CD4-positive, alpha-beta T cell (primary cell): ENCODE measurements at regions of chr1 and their contacts with region 1.

Region 1: DNA sequence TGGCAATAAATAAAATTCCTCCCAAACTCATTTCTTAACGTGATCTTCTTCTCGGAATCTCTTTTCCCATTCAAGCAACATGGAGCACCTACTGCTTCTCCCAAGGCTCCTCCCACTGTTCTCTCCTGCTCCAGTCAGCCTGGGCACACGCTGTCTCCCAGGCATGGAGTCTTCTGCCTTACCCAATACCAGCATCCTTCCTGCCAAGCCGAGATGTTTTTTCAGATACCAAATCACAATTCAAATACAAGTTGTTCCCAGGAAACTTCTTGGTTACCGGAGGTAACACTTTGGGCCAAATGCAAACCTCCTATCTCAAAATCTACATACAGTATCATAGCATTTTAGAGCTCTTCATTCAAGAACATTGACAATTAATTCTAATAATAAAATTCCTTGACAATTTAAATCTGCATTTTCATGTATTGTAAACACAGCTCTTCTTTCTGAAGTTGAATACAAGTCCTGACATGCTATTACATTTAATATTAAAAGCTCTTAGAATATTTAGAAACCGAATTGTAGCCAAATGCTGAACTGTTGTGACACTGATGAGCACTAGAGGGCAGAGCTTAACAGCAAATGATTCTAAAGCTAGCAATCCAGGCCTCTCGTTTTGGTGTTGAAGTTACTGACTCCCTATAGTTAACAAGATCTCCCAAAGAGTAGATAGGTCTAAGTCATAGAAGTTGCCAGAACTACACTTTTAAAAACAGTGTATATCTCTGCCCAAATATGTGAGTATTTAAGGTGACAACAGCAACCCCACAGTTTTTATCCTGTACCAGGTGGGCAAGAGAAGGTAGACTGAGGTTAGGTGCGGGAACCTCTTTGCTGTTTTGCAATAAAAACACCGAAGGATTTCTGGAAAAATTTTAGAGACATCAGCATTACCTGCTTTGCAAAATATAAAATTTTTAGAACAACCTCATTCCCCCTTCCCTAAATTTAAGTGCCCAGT is 52.3 kb downstream of the BCAR3 start:
- DNase-seq: peak in 11 of 14 experiments; percentile 9 to 80 (median 33)
- ATAC-seq: peak; percentile 88
- H3K4me3 ChIP-seq: no peak overlapping the region
- H3K4me3 Mint-ChIP-seq: no peak overlapping the region
- H3K27ac ChIP-seq: no peak overlapping the region
- H3K27ac Mint-ChIP-seq: no peak overlapping the region
- H3K4me1 ChIP-seq: no peaks in the 10 kb centered on the region
- H3K4me1 Mint-ChIP-seq: no peaks in the 10 kb centered on the region
- H3K27me3 ChIP-seq: no peaks in the 10 kb centered on the region
- H3K27me3 Mint-ChIP-seq: no peaks in the 10 kb centered on the region
- CTCF ChIP-seq: peak; percentile 90

Region 2: DNA sequence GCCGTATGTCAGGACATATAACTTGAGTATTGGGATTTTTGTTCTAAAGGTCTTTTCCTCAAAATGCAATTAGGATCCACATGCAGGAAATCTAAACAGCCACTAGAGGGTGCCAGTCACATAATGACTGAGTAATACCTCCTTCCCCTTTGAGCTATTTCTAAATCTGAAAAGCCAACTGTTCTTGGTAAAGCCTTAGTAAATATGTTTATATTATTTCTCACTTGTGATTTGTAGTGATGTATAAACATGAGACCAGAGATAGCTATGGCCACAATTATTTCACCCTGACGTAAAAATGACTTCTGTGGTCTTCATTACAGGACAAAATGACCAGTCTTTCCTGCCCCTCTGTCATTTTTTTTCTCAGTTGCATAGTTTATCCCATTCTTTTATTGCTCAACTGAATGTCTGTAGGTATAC is 324.7 kb before region 1 on chr1:
- CTCF ChIA-PET with region 1: interaction called, 4 read pairs
- POLR2A ChIA-PET with region 1: no interaction called
- intact Hi-C with region 1: loop called in 1 of 2 experiments (anchors 5 kb)
- DNase-seq: peak in 12 of 14 experiments; percentile 5 to 80 (median 34)
- ATAC-seq: peak; percentile 73
- H3K4me3 ChIP-seq: no peak overlapping the region
- H3K4me3 Mint-ChIP-seq: no peak overlapping the region
- H3K27ac ChIP-seq: no peak overlapping the region
- H3K27ac Mint-ChIP-seq: no peak overlapping the region
- H3K4me1 ChIP-seq: no peaks in the 10 kb centered on the region
- H3K4me1 Mint-ChIP-seq: no peaks in the 10 kb centered on the region
- H3K27me3 ChIP-seq: no peaks in the 10 kb centered on the region
- H3K27me3 Mint-ChIP-seq: no peaks in the 10 kb centered on the region
- CTCF ChIP-seq: peak; percentile 92

Region 3: DNA sequence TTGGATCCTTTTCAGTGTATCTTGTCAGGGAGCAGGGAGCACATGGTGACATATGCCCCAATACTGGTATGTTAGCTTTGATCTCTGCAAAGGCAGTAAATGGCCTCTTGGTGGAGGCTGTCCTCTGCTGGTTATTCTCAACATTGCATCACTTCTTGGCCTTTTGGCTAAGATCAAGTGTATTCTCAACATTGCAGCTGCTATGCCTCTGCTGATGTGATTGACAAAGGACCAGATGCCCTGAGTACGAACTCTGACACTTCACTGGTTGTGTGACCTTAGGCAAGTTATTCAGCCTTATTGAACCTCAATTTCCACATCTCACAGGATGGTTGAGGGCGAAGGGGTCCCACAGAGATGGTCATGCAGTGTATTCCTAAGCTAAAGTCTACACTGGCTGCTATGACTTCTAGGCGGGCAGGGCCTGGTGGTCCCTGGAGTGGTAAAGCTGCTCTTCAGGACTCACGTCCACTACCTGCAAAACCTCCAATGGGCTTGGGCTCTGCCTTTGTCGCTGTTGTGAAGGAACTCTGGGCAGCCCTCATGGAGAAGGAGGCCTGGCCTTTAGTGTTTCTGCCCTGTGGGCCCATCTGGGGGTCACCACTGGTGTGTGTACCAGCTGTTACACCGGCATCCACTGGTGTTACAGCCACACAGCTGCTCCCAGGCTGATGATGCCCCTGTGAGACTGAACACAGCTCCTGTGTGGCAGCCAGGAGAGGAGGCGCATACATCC is 184.8 kb after region 1 on chr1:
- CTCF ChIA-PET with region 1: interaction called, 8 read pairs
- POLR2A ChIA-PET with region 1: no interaction called
- intact Hi-C with region 1: loop called (anchors 1 kb)
- DNase-seq: peak in 9 of 14 experiments; percentile 8 to 72 (median 25)
- ATAC-seq: peak; percentile 31
- H3K4me3 ChIP-seq: no peak overlapping the region
- H3K4me3 Mint-ChIP-seq: no peak overlapping the region
- H3K27ac ChIP-seq: no peak overlapping the region
- H3K27ac Mint-ChIP-seq: no peak overlapping the region
- H3K4me1 ChIP-seq: peaks cover 17% of the 10 kb centered on the region
- H3K4me1 Mint-ChIP-seq: peaks cover 22% of the 10 kb centered on the region
- H3K27me3 ChIP-seq: no peaks in the 10 kb centered on the region
- H3K27me3 Mint-ChIP-seq: no peaks in the 10 kb centered on the region
- CTCF ChIP-seq: peak; percentile 71

Region 4: GRCh38 chr1:93909146-93910050 is 280.0 kb after region 1 on chr1 and contains the start of gene GCLM:
- CTCF ChIA-PET with region 1: interaction called, 16 read pairs
- POLR2A ChIA-PET with region 1: interaction called, 4 read pairs
- intact Hi-C with region 1: loop called (anchors 1 to 2 kb)
- DNase-seq: peak; percentile 78 to 95 (median 86)
- ATAC-seq: peak; percentile 89
- H3K4me3 ChIP-seq: peak within 1 kb of the TSS; percentile 68
- H3K4me3 Mint-ChIP-seq: peak within 1 kb of the TSS; percentile 96
- H3K27ac ChIP-seq: peak within 1 kb of the TSS; percentile 25 to 73
- H3K27ac Mint-ChIP-seq: peak within 1 kb of the TSS; percentile 83
- H3K4me1 ChIP-seq: peaks cover 20% of the 10 kb centered on the region
- H3K4me1 Mint-ChIP-seq: peaks cover 44% of the 10 kb centered on the region
- H3K27me3 ChIP-seq: no peaks in the 10 kb centered on the region
- H3K27me3 Mint-ChIP-seq: no peaks in the 10 kb centered on the region
- CTCF ChIP-seq: peak; percentile 78
- total RNA-seq, gene GCLM: 6.1 to 6.8 TPM

Region 5: DNA sequence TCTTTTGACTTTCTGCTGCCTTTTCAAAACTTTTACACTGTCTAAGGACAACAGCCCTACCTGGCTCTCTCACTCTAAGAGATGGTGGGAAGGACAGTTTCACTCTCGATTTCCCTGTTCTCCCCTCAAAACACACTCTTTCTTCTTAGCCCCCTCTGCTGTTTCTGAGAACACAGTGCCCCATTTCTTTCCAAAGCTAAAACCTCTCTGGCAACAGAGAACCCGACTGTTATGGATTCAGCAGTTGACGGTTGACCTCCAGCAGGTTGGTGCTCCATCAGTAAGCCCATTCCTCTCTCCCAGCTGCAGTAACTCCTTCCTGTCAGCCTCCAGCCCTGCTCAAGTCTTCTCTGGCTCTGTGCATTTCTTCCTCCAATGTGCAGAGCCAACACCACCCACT is 700.6 kb after region 1 on chr1:
- CTCF ChIA-PET with region 1: no interaction called
- POLR2A ChIA-PET with region 1: no interaction called
- intact Hi-C with region 1: loop called in 1 of 2 experiments (anchors 5 kb)
- DNase-seq: no peak
- ATAC-seq: no peak
- H3K4me3 ChIP-seq: no peak overlapping the region
- H3K4me3 Mint-ChIP-seq: no peak overlapping the region
- H3K27ac ChIP-seq: no peak overlapping the region
- H3K27ac Mint-ChIP-seq: no peak overlapping the region
- H3K4me1 ChIP-seq: no peaks in the 10 kb centered on the region
- H3K4me1 Mint-ChIP-seq: no peaks in the 10 kb centered on the region
- H3K27me3 ChIP-seq: peaks cover 17 to 31% of the 10 kb centered on the region in 2 experiments
- H3K27me3 Mint-ChIP-seq: peaks cover 46% of the 10 kb centered on the region
- CTCF ChIP-seq: no peak

Region 6: GRCh38 chr1:95043141-95043980 is 1414.0 kb after region 1 on chr1:
- CTCF ChIA-PET with region 1: no interaction called
- POLR2A ChIA-PET with region 1: no interaction called
- intact Hi-C with region 1: loop called in 1 of 2 experiments (anchors 5 kb)
- DNase-seq: peak; percentile 63 to 88 (median 69)
- ATAC-seq: peak; percentile 99
- H3K4me3 ChIP-seq: no peak overlapping the region
- H3K4me3 Mint-ChIP-seq: no peak overlapping the region
- H3K27ac ChIP-seq: no peak overlapping the region
- H3K27ac Mint-ChIP-seq: no peak overlapping the region
- H3K4me1 ChIP-seq: no peaks in the 10 kb centered on the region
- H3K4me1 Mint-ChIP-seq: no peaks in the 10 kb centered on the region
- H3K27me3 ChIP-seq: no peaks in the 10 kb centered on the region
- H3K27me3 Mint-ChIP-seq: no peaks in the 10 kb centered on the region
- CTCF ChIP-seq: peak; percentile 100